Activated CD4-positive, alpha-beta memory T cell treated with anti-CD3 and anti-CD28 coated beads, Interleukin-2, amount 10 ng/mL, durations not matched to agents 7 days and 5 days (primary cell): ENCODE measurements at regions of chr1 and their contacts with region 1.

Region 1: DNA sequence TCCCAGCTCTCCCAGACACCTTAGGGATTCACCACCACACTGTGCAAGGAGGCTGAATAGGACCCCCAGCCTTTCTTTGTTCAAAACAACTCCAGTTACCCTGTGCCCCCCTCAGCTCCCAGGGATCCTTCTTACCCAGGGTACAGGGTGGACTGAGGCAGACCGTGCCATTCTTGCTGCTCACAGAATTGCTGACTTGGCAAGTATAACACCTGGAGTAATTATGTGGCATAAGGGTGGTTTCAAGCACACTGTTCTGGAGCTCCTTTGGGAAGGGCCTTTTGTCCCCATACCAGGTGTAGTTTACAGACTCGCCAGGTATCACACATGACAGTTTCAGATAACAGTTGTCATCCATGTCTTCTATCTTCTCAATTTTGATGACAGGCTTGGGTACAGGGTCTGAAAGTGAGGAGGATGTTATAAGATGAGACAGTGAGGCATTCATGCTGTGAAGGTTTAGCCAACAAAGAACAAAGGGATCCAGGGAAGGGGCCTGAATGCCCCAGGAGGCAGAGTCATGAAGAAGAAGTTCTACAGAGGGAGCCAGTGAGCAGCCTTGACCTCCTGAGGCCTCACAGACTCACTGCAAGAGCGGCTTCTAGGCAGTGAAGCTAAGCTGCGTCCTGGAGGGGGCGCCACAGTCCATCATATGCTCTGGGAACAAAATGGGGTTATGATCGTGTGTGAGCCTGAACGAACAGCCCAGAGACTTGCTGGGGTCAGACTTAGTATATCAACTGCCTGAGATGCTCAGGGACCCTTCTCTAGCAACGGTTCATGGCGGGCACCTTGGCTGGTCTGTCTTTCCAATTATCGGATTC is 30.3 kb downstream of the CD48 start:
- DNase-seq: peak; percentile 90
- H3K4me3 Mint-ChIP-seq: no peak overlapping the region
- H3K27ac Mint-ChIP-seq: peak overlapping the region; percentile 96
- H3K4me1 Mint-ChIP-seq: peaks cover 79% of the 10 kb centered on the region
- H3K27me3 Mint-ChIP-seq: no peaks in the 10 kb centered on the region

Region 2: GRCh38 chr1:160618763-160619274 is 62.5 kb before region 1 on chr1:
- CTCF ChIA-PET with region 1: interaction called, 20 read pairs
- POLR2A ChIA-PET with region 1: interaction called, 41 read pairs
- DNase-seq: no peak
- H3K4me3 Mint-ChIP-seq: no peak overlapping the region
- H3K27ac Mint-ChIP-seq: peak overlapping the region; percentile 48
- H3K4me1 Mint-ChIP-seq: peaks cover 75% of the 10 kb centered on the region
- H3K27me3 Mint-ChIP-seq: no peaks in the 10 kb centered on the region

Region 3: DNA sequence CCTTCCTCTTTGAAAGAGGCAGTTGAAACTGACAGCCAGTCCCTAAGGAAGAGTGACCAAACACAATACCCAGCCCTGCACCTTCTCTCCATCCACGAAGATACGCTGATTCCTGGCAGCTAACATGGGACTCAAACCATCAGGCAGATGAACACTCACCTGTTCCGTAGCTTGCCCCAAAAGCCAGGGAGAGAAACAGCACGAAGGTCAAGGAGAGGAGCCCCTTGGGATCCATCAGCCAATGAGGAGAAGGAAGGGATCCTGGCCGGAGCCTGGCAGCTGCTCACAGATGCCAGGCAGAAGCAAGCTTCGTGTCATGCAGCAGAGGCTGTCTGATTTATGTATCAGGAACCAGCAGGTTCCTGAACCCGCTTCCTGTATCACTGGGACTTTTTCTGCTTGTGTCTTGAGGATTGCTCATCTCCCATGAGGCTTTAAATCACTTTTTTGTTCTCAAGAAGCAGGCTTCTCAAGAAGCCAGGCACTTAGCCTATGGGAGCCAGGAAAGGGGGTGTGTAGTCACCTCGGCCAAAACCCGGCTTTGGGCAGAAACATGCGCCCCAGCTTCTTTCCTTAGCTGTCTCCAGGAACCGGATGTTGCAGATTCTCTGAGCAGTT is 34.5 kb before region 1 on chr1 and contains the start of gene SLAMF1:
- CTCF ChIA-PET with region 1: interaction called, 46 read pairs
- POLR2A ChIA-PET with region 1: interaction called, 70 read pairs
- DNase-seq: peak; percentile 49
- H3K4me3 Mint-ChIP-seq: peak within 1 kb of the TSS; percentile 88
- H3K27ac Mint-ChIP-seq: peak within 1 kb of the TSS; percentile 89
- H3K4me1 Mint-ChIP-seq: peaks cover 53% of the 10 kb centered on the region
- H3K27me3 Mint-ChIP-seq: no peaks in the 10 kb centered on the region
- total RNA-seq, gene SLAMF1: 106 to 113 TPM

Region 4: DNA sequence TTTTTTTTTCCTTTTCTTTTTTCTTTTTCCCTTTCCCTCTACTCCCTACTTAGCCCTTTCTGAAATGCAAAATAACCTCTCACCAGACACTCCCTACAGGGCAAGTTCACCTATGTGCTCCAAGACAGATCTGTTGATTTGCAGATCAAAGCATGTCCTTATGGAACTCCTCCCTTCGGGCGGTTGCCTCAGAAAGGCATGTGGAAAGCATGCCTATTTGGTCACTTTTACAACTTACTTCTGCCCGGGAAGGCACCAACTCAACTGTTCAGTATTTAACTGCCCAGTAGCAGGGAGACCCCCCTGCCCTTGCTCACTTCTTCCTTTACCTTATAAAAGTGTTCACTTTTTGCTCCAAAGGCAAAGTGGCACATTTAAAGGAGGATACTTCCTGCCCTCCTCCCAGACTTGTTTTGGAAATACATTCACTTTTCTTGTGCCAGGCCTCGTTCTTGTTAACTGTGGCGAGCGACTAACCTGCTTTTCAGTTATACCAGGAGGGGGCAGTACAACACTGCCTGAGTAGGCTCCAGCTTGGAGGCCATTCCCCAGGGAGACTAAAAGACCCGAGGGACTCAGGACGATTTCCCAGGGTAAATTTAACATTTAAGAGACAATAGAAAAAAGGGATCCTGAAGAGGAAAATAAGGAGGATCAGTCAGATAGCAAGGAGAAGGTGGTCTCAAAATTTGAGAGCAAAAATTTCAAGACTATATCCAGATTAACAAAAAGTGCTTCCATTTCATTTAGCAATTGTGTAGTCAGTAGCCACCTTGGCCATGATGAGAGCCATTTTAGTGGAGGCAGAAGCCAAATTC is 45.4 kb after region 1 on chr1:
- CTCF ChIA-PET with region 1: interaction called, 86 read pairs
- POLR2A ChIA-PET with region 1: interaction called, 16 read pairs
- DNase-seq: peak; percentile 70
- H3K4me3 Mint-ChIP-seq: no peak overlapping the region
- H3K27ac Mint-ChIP-seq: no peak overlapping the region
- H3K4me1 Mint-ChIP-seq: peaks cover 31% of the 10 kb centered on the region
- H3K27me3 Mint-ChIP-seq: no peaks in the 10 kb centered on the region

Region 5: DNA sequence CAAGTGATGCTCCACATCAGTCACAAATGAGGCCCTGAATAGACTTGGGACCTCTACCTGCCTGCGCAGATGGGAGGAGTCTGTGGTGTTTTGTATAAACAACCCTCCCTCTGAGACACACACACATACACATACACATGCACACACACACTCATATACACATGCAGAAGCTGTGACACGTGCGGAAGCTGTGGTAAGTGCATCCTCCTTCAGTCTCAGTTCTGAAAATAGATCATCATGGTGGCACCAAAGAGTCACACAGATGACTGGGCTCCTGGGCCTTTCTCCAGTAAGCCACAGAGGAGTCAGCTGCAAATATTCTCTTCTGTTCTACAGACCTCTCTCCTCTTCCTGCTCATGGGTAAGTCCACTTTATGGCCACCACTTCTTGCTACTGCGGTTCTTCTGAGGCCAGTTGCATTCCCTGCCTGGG is 114.7 kb after region 1 on chr1 and contains the start of gene LY9:
- CTCF ChIA-PET with region 1: interaction called, 3 read pairs
- POLR2A ChIA-PET with region 1: interaction called, 11 read pairs
- DNase-seq: peak; percentile 88
- H3K4me3 Mint-ChIP-seq: peak within 1 kb of the TSS; percentile 91
- H3K27ac Mint-ChIP-seq: peak within 1 kb of the TSS; percentile 96
- H3K4me1 Mint-ChIP-seq: peaks cover 66% of the 10 kb centered on the region
- H3K27me3 Mint-ChIP-seq: peaks cover 3% of the 10 kb centered on the region
- total RNA-seq, gene LY9: 46.4 to 49.9 TPM

Region 6: DNA sequence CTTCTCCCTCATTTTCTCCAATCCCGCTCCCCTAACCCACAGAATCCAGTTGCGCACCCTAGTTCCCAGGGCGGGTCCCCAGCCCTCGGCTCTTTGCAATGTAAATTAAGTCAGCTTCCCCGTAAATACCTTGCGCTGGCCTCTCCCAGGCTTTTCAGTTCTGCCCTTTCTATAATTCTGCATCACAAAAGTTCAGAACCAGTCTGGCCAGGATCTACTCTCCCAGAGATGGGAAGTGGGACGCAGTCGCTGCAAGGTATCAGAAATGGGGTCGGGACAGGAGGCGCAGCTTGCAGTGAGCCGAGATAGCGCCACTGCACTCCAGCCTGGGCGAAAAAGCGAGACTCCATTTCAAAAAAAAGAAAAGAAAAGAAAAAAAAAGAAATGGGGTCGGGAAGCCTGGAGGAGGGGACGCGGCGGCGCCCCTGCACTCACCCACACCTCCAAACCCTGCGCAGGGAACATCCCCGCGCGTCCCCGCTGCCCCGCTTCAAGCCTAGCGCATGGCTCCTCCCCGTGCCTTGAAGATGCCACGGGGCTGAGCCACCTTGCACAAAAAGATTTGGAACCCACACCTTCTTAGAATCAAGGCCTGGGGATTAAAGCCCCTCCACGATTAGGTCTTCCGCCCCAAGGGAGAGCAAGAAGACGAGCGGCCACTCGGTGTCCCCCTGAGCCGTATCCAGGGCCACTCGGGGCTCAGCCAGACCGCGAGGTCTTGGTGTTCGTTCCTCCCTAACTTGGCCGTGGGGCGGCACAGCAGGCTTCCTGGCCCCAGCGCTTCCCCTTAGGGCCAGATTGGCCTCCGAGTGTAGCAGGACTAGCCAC is 300.5 kb after region 1 on chr1:
- CTCF ChIA-PET with region 1: no interaction called
- POLR2A ChIA-PET with region 1: no interaction called
- DNase-seq: no peak
- H3K4me3 Mint-ChIP-seq: peak overlapping the region; percentile 53
- H3K27ac Mint-ChIP-seq: no peak overlapping the region
- H3K4me1 Mint-ChIP-seq: peaks cover 9% of the 10 kb centered on the region
- H3K27me3 Mint-ChIP-seq: peaks cover 33% of the 10 kb centered on the region